PC-9 (cell line): ENCODE measurements at regions of chr3 and their contacts with region 1.

Region 1: DNA sequence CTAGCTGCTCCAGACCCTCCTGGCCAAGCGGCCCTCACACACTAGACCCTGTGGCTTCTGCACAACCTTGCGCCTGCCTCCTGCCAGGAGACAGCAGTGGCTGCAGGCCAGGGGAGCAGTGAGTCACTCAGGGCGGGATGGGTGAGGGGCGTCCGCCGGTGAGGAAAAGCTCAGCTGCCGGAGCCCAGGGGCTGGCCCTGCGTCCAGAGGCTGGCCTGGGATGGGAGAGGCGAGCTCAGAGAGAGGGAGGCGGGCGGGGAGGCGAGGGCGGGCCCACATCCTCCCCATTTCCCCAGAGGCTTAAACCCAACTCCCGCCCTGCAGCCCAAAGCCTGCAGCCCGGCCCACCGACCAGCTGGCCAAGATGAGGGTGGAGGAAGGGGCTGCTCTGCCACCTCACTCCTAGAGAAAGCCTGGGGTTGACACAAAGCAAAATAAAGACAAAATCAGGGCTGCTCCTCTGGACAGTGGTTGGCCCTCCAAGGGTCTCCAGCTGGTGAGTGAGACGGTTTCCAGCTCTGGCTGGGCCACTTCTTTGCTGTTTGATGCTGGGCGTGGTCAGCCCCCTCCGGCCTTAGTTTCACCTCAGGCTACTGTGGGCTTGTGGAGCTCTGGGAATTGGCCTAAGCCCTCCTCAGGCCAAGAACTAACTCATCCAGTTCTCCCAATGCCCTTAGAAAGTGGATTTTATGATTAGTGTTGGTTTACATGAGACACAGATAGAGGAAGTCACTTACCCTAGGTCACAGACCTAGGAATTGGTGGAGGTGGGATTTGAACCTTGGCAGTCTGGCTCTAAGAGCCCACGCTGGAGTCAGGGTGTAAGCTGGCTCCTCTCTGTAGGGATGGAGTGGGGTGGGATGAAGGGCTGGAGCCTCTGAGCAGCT is 50.6 kb downstream of the IQSEC1 start:
- DNase-seq: peak; percentile 81 to 94
- H3K4me3 ChIP-seq: peak overlapping the region; percentile 61
- H3K27ac ChIP-seq: peak overlapping the region; percentile 87
- H3K4me1 ChIP-seq: peaks cover 62% of the 10 kb centered on the region
- H3K27me3 ChIP-seq: no peaks in the 10 kb centered on the region
- CTCF ChIP-seq: no peak

Region 2: DNA sequence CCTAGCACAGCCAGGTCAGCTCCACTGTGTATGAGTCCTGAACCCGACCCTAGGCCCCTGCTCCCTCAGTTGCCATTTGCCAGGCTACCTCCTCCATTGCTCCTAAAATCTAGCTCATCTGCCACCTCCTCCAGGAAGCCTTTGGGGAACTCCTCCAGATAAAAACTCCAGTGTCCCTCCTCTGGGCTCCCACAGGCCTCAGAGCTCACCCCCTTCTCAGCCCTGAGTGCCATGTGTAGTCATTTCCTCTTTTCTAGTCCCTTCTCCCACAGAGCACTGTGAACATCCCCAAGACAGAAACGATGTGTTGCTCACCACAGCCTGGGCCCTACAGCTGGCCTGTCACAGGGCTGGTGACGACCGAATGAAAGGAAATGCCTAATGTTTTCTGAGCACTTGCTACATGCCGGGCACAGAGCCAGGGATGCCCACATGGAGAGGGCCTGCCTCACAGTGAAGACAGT is 10.3 kb before region 1 on chr3:
- CTCF ChIA-PET with region 1: no interaction called
- POLR2A ChIA-PET with region 1: interaction called, 16 read pairs
- intact Hi-C with region 1: no loop called
- DNase-seq: no peak
- H3K4me3 ChIP-seq: peak overlapping the region; percentile 18; the same call in 1 of the 2 replicates
- H3K27ac ChIP-seq: peak overlapping the region; percentile 75
- H3K4me1 ChIP-seq: peaks cover 62% of the 10 kb centered on the region
- H3K27me3 ChIP-seq: no peaks in the 10 kb centered on the region
- CTCF ChIP-seq: no peak

Region 3: GRCh38 chr3:13063225-13063624 is 40.6 kb after region 1 on chr3:
- CTCF ChIA-PET with region 1: interaction called, 3 read pairs
- POLR2A ChIA-PET with region 1: no interaction called
- intact Hi-C with region 1: loop called (anchors 2 kb)
- DNase-seq: peak; percentile 77 to 80
- H3K4me3 ChIP-seq: no peak overlapping the region
- H3K27ac ChIP-seq: no peak overlapping the region
- H3K4me1 ChIP-seq: peaks cover 20% of the 10 kb centered on the region
- H3K27me3 ChIP-seq: no peaks in the 10 kb centered on the region
- CTCF ChIP-seq: no peak

Region 4: DNA sequence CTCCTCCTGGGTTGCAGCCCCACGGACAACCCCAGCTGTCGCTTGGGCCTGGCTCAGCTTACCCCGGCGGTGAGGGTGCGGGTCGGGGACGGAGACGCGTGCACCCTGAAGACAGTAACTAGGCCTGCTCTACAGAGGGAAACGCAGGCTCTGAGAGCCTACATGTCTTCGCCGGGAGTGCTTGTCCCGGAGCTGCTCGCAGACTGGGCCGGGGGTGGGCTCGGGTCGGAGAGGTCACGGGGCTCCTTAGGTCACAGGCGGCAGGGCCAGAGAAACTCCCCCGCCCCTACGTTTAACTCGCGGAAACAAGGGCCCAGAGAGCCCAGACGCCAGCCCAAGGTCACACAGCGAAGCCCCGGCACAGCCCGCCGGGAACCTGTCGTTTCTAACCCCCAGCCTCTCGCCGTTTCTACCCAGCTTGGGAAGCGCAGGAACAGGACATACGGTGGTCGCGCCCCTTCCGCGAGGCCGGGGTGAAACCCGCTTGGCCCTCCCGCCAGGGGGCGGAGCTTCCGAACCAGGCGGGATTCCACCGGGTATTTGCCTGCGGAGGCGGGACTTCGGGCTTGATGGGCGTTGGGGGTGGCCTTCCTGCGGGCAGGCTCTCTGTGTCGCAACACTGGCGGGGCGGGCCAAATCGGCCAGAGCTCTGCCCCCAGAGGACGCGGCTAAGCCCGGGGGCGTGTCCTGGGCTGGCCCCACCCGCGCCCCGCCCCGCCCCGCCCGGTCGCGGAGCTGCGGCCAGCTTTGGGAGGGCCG is 457.2 kb after region 1 on chr3 and contains the start of gene HDAC11:
- CTCF ChIA-PET with region 1: no interaction called
- POLR2A ChIA-PET with region 1: interaction called, 16 read pairs
- intact Hi-C with region 1: no loop called
- DNase-seq: peak; percentile 87 to 98
- H3K4me3 ChIP-seq: peak within 1 kb of the TSS; percentile 94
- H3K27ac ChIP-seq: no peak within 1 kb of the TSS
- H3K4me1 ChIP-seq: peaks cover 39% of the 10 kb centered on the region
- H3K27me3 ChIP-seq: no peaks in the 10 kb centered on the region
- CTCF ChIP-seq: peak; percentile 55
- total RNA-seq, gene HDAC11: 18.4 and 24.3 TPM in 2 replicates

Region 5: DNA sequence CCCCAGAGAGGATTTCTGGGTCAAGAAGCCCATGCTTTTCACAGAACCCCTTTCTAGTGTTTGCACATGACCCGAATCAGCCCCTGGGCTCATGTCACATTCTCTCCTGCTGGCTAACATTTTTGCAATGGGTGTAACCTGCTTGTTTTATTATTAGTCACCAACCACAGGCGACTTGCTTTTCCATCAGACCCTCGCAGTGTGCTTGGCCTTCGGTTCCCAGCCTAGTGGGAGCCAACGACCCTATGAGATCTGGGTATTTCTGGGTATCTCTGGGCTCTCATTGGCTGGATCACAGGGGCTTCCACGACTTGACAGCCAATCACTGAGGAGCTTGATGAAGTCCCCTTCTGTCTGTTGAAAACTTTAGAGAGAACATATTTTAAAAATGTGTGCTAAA is 515.3 kb after region 1 on chr3:
- CTCF ChIA-PET with region 1: no interaction called
- POLR2A ChIA-PET with region 1: no interaction called
- intact Hi-C with region 1: no loop called
- DNase-seq: peak; percentile 80 to 93
- H3K4me3 ChIP-seq: 0 out of 2 replicates have a peak overlapping the region, but pooled peaks have one; percentile 1
- H3K27ac ChIP-seq: peak overlapping the region; percentile 89
- H3K4me1 ChIP-seq: peaks cover 74% of the 10 kb centered on the region
- H3K27me3 ChIP-seq: no peaks in the 10 kb centered on the region
- CTCF ChIP-seq: no peak